HCT116 (cell line): ENCODE measurements at regions of chrX and their contacts with region 1.

Region 1: DNA sequence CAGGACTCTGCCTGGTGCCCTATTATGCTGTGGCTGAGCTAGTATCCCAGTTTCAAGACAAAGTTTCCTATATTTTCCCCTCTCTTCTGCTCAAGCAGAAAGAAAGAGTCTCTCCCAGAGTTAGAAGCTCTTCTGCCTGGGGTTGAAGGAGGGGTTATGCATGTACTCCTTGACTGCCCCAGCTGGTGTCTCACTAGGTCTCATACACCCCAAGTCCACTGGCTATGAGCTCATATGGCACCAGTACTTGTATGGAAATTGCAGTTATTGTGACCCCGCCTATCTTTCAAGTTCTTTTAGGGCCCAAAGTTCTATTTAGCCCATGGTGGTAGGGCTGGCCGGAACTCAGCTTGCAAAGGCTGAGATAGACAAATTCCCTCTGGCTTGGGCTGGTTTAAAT is 131.8 kb downstream of the NBDY start:
- DNase-seq: no peak
- ATAC-seq: no peak
- H3K4me3 ChIP-seq: no peak overlapping the region
- H3K27ac ChIP-seq: no peak overlapping the region
- H3K4me1 ChIP-seq: no peaks in the 10 kb centered on the region
- H3K27me3 ChIP-seq: no peaks in the 10 kb centered on the region
- CTCF ChIP-seq: no peak
- POLR2A ChIP-seq: no peak
- RAD21 ChIP-seq: no peak

Region 2: GRCh38 chrX:56382278-56382677 is 478.6 kb before region 1 on chrX:
- CTCF ChIA-PET with region 1: no interaction called
- POLR2A ChIA-PET with region 1: no interaction called
- RAD21 ChIA-PET with region 1: no interaction called
- intact Hi-C with region 1: no loop called
- DNase-seq: no peak
- ATAC-seq: no peak
- H3K4me3 ChIP-seq: no peak overlapping the region
- H3K27ac ChIP-seq: no peak overlapping the region
- H3K4me1 ChIP-seq: no peaks in the 10 kb centered on the region
- H3K27me3 ChIP-seq: no peaks in the 10 kb centered on the region
- CTCF ChIP-seq: no peak
- POLR2A ChIP-seq: no peak
- RAD21 ChIP-seq: no peak

Region 3: GRCh38 chrX:56530011-56530410 is 330.9 kb before region 1 on chrX:
- CTCF ChIA-PET with region 1: no interaction called
- POLR2A ChIA-PET with region 1: no interaction called
- RAD21 ChIA-PET with region 1: no interaction called
- intact Hi-C with region 1: no loop called
- DNase-seq: no peak
- ATAC-seq: no peak
- H3K4me3 ChIP-seq: no peak overlapping the region
- H3K27ac ChIP-seq: no peak overlapping the region
- H3K4me1 ChIP-seq: no peaks in the 10 kb centered on the region
- H3K27me3 ChIP-seq: no peaks in the 10 kb centered on the region
- CTCF ChIP-seq: no peak
- POLR2A ChIP-seq: no peak
- RAD21 ChIP-seq: no peak

Region 4: GRCh38 chrX:56920338-56920997 is 59.6 kb after region 1 on chrX:
- CTCF ChIA-PET with region 1: no interaction called
- POLR2A ChIA-PET with region 1: no interaction called
- RAD21 ChIA-PET with region 1: no interaction called
- intact Hi-C with region 1: loop called (anchors 10 kb)
- DNase-seq: no peak
- ATAC-seq: no peak
- H3K4me3 ChIP-seq: no peak overlapping the region
- H3K27ac ChIP-seq: no peak overlapping the region
- H3K4me1 ChIP-seq: no peaks in the 10 kb centered on the region
- H3K27me3 ChIP-seq: no peaks in the 10 kb centered on the region
- CTCF ChIP-seq: no peak
- POLR2A ChIP-seq: no peak
- RAD21 ChIP-seq: no peak